ENCODE measurements at regions of chr19 and their contacts with region 1.

Region 1: GRCh38 chr19:13484166-13484565 is 22.1 kb downstream of the CACNA1A start:
- DNase-seq: no peak
- ATAC-seq: no peak
- H3K4me3 ChIP-seq: no peak overlapping the region
- H3K27ac ChIP-seq: no peak overlapping the region
- H3K4me1 ChIP-seq: no peaks in the 10 kb centered on the region
- H3K27me3 ChIP-seq: peaks cover 2% of the 10 kb centered on the region; the same call in 1 of the 2 replicates
- CTCF ChIP-seq: no peak

Region 2: DNA sequence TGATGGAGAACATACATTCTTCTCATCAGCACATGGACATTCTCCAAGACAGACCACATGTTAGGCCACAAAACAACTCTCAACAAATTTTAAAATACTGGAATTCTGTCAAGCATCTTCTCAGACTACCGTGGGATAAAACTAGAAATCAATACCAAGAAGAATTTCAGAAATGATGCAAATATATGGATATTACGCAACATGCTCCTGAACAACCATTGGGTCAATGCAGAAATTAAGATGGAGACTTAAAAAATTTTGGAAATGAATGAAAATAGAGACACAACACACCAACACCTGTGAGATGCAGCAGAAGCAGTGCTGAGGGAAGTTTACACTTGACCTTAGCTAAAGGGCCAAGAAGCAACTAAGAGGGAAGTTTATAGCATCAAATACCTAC is 140.7 kb before region 1 on chr19:
- CTCF ChIA-PET with region 1: interaction called, 15 read pairs
- POLR2A ChIA-PET with region 1: no interaction called
- in situ Hi-C with region 1: no loop called
- intact Hi-C with region 1: no loop called
- DNase-seq: no peak
- ATAC-seq: no peak
- H3K4me3 ChIP-seq: no peak overlapping the region
- H3K27ac ChIP-seq: no peak overlapping the region
- H3K4me1 ChIP-seq: no peaks in the 10 kb centered on the region
- H3K27me3 ChIP-seq: no peaks in the 10 kb centered on the region
- CTCF ChIP-seq: no peak

Region 3: DNA sequence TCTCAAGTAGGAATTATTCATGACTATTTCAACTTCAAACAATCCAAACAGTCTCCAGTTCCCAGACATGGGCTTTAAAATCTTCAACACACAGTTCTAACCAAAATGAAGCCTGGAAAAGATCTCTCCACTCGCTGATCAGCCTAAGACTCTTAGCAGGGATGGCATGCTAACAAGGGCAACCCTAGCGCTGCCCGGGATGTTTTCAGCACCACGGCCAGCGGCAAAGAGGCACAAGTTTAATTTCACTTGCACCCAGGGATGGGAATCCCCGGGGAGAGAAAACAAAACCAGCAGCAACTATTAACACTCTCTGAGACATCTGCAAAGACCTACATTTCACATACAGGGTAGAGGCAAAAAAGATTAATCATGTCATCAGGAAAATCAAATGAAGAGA is 20.9 kb before region 1 on chr19:
- CTCF ChIA-PET with region 1: no interaction called
- POLR2A ChIA-PET with region 1: no interaction called
- in situ Hi-C with region 1: no loop called
- intact Hi-C with region 1: no loop called
- DNase-seq: no peak
- ATAC-seq: no peak
- H3K4me3 ChIP-seq: no peak overlapping the region
- H3K27ac ChIP-seq: no peak overlapping the region
- H3K4me1 ChIP-seq: no peaks in the 10 kb centered on the region
- H3K27me3 ChIP-seq: peaks cover 15% of the 10 kb centered on the region; the same call in 1 of the 2 replicates
- CTCF ChIP-seq: no peak

Region 4: GRCh38 chr19:13521066-13521465 is 36.9 kb after region 1 on chr19:
- CTCF ChIA-PET with region 1: no interaction called
- POLR2A ChIA-PET with region 1: no interaction called
- in situ Hi-C with region 1: loop called (anchors 5 kb)
- intact Hi-C with region 1: no loop called
- DNase-seq: no peak
- ATAC-seq: no peak
- H3K4me3 ChIP-seq: no peak overlapping the region
- H3K27ac ChIP-seq: no peak overlapping the region
- H3K4me1 ChIP-seq: no peaks in the 10 kb centered on the region
- H3K27me3 ChIP-seq: peaks cover 2% of the 10 kb centered on the region
- CTCF ChIP-seq: peak; percentile 5; the same call in 1 of the 2 replicates